Mammary epithelial cell (primary cell): ENCODE measurements at regions of chr9 and their contacts with region 1.

Region 1: DNA sequence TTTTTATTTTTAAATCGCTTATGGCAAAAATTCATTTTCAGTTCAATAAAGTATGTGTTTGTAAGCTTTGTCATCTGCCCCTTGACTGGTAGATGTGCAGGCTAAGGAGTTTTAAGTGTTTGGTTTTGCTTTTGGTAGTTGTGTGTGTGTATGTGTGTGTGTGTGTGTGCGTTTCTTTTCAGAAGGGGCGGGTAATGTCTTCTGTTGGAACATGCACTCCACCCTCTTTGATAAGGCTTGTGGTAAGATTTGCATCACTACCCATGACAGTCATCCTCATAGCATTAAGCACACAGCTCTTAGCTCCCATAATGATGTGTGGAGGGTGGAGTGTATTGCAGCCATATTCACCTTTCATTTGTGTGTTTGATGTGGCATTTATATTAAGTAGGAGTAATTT is 92.1 kb upstream of the FSD1L start:
- DNase-seq: peak; percentile 60
- H3K4me3 ChIP-seq: no peak overlapping the region
- H3K27ac ChIP-seq: no peak overlapping the region
- H3K4me1 ChIP-seq: no peaks in the 10 kb centered on the region
- H3K27me3 ChIP-seq: no peaks in the 10 kb centered on the region
- CTCF ChIP-seq: peak in 1 of 2 donors; percentile 18

Region 2: GRCh38 chr9:105280691-105281090 is 75.1 kb before region 1 on chr9:
- CTCF ChIA-PET with region 1: interaction called, 4 read pairs
- dilution Hi-C with region 1: loop called (anchors 5 kb)
- in situ Hi-C with region 1: no loop called
- intact Hi-C with region 1: no loop called
- DNase-seq: peak; percentile 99
- H3K4me3 ChIP-seq: no peak overlapping the region
- H3K27ac ChIP-seq: peak overlapping the region; percentile 96
- H3K4me1 ChIP-seq: peaks cover 23% of the 10 kb centered on the region
- H3K27me3 ChIP-seq: no peaks in the 10 kb centered on the region
- CTCF ChIP-seq: no peak

Region 3: DNA sequence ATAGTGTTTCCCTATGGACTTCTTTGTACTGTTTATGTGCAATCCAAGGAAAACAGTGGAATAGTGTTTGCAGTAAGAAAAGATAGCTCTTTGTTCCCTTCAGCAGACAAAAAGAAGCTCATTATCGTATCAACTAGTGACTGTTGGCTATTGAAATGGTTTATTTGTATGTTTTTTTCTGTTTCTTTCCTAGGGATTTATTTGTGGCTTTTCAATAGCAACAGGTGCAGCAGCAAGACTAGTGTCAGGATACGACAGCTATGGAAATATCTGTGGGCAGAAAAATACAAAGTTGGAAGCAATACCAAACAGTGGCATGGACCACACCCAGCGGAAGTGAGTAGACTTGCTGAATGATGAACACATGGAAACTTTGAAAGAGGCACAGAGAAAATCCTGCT is 46.2 kb before region 1 on chr9:
- CTCF ChIA-PET with region 1: no interaction called
- dilution Hi-C with region 1: no loop called
- in situ Hi-C with region 1: loop called in 1 of 2 experiments (anchors 10 kb)
- intact Hi-C with region 1: no loop called
- DNase-seq: no peak
- H3K4me3 ChIP-seq: no peak overlapping the region
- H3K27ac ChIP-seq: no peak overlapping the region
- H3K4me1 ChIP-seq: no peaks in the 10 kb centered on the region
- H3K27me3 ChIP-seq: no peaks in the 10 kb centered on the region
- CTCF ChIP-seq: no peak

Region 4: GRCh38 chr9:105447814-105448812 is 92.3 kb after region 1 on chr9 and contains the start of gene FSD1L:
- CTCF ChIA-PET with region 1: no interaction called
- dilution Hi-C with region 1: no loop called
- in situ Hi-C with region 1: no loop called
- intact Hi-C with region 1: no loop called
- DNase-seq: peak; percentile 88
- H3K4me3 ChIP-seq: peak within 1 kb of the TSS; percentile 73 to 96 (median 93)
- H3K27ac ChIP-seq: peak within 1 kb of the TSS; percentile 78
- H3K4me1 ChIP-seq: peaks cover 11% of the 10 kb centered on the region
- H3K27me3 ChIP-seq: no peaks in the 10 kb centered on the region
- CTCF ChIP-seq: peak in 1 of 2 donors; percentile 19
- total RNA-seq, gene FSD1L: 8.9 to 10.8 TPM